K562 (cell line): ENCODE measurements at regions of chr14 and their contacts with region 1.

Region 1: GRCh38 chr14:94460631-94461416 is 8.2 kb upstream of the SERPINA11 start:
- DNase-seq: no peak
- ATAC-seq: no peak
- H3K4me3 ChIP-seq: no peak overlapping the region
- H3K27ac ChIP-seq: no peak overlapping the region
- H3K4me1 ChIP-seq: no peaks in the 10 kb centered on the region
- H3K27me3 ChIP-seq: no peaks in the 10 kb centered on the region
- CTCF ChIP-seq: no peak
- EP300 ChIP-seq: no peak
- POLR2A ChIP-seq: no peak
- RAD21 ChIP-seq: no peak

Region 2: GRCh38 chr14:94412671-94413638 is 47.9 kb before region 1 on chr14:
- CTCF ChIA-PET with region 1: no interaction called
- POLR2A ChIA-PET with region 1: no interaction called
- in situ Hi-C with region 1: no loop called
- intact Hi-C with region 1: loop called (anchors 2 kb)
- DNase-seq: no peak
- ATAC-seq: no peak
- H3K4me3 ChIP-seq: no peak overlapping the region
- H3K27ac ChIP-seq: no peak overlapping the region
- H3K4me1 ChIP-seq: no peaks in the 10 kb centered on the region
- H3K27me3 ChIP-seq: no peaks in the 10 kb centered on the region
- CTCF ChIP-seq: peak in 2 of 3 experiments; percentile 7 to 14; a peak in 1 of 6 replicates
- EP300 ChIP-seq: no peak
- POLR2A ChIP-seq: no peak
- RAD21 ChIP-seq: no peak

Region 3: DNA sequence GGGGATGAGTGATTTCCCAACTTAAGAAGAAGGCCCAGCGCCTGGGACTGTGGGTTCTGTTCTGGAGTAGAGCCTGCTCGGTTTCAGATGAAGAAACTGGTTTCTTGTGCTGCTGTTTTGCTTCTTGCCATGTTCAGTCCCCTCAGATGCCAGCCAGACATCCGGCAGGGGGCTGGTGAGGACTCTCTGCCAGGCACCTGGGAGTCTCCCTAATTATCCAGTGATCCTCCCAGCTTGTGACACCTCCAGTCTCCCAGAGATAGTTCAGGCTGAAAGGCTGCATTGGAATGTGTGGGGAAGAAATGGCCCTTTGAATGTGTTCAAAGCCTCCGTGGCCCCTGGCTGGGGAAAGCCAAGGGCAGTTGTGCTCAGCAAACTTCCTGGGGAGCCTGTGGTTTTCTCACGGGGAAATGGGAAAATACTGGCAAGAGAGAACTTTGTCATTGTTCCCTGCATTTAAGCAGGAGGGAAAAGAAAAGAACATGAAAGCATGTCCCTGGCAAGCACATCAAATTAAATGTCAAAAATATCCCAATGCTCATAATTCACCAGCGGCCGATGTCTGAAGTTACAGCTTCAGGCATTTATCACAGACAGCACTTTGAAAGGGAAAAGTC is 56.9 kb after region 1 on chr14:
- CTCF ChIA-PET with region 1: no interaction called
- POLR2A ChIA-PET with region 1: no interaction called
- in situ Hi-C with region 1: no loop called
- intact Hi-C with region 1: no loop called
- DNase-seq: no peak
- ATAC-seq: no peak
- H3K4me3 ChIP-seq: no peak overlapping the region
- H3K27ac ChIP-seq: no peak overlapping the region
- H3K4me1 ChIP-seq: no peaks in the 10 kb centered on the region
- H3K27me3 ChIP-seq: no peaks in the 10 kb centered on the region; a peak in 1 of 5 replicates
- CTCF ChIP-seq: no peak
- EP300 ChIP-seq: no peak
- POLR2A ChIP-seq: no peak
- RAD21 ChIP-seq: no peak